Posterior vena cava (tissue), 2 donors: ENCODE measurements at regions of chr3 and their contacts with region 1.

Region 1: GRCh38 chr3:69784954-69785514 is 45.8 kb downstream of the MITF start:
- DNase-seq: peak; percentile 89

Region 2: DNA sequence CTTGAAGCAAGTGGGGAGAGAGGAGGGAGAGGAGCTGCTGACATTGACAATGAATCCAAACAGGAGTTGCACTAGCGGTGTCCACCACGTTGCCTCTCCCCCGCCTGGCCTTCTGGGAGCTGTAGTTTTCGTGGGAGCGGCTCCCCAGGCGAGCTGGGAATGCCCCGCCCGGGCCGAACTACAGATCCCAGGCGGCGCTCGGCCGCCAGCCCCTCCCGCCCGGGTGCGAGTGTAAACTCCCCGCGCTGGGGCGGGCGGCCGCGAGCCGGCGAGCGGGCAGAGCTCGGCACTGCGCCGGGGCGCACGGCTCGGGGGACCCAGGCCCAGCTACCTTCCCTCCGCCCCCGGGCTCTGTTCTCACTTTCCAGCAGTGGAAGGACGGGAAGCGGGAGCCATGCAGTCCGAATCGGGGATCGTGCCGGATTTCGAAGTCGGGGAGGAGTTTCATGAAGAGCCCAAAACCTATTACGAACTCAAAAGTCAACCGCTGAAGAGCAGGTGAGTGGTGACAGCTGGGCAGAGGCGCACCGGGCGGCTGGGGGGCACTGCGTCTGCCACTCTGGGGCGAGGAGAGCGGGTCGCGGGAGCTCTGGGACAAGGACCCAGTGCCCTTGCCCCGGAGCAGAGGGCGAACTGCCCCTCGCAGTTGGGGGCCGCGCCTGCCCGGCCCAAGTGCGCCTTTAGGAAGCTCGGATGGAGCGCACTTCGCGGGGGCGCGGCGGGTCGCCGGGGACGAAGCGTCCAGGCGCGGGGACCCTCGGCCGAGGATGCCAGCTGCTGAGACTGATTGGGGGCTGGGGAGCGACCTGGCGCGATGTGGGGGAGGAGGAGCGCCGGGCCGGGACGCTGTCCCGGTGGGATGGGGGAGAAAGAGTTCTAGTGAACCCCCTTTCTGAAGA is 45.6 kb before region 1 on chr3 and contains the start of gene MITF:
- intact Hi-C with region 1: loop called in 1 of 2 experiments (anchors 5 kb)
- DNase-seq: peak; percentile 98
- total RNA-seq, gene MITF: 25.9 to 61.4 TPM

Region 3: GRCh38 chr3:69890084-69890483 is 105.0 kb after region 1 on chr3:
- intact Hi-C with region 1: no loop called
- DNase-seq: no peak

Region 4: GRCh38 chr3:69930564-69930963 is 145.5 kb after region 1 on chr3:
- intact Hi-C with region 1: no loop called
- DNase-seq: no peak